ENCODE measurements at regions of chr4 and their contacts with region 1.

Region 1: DNA sequence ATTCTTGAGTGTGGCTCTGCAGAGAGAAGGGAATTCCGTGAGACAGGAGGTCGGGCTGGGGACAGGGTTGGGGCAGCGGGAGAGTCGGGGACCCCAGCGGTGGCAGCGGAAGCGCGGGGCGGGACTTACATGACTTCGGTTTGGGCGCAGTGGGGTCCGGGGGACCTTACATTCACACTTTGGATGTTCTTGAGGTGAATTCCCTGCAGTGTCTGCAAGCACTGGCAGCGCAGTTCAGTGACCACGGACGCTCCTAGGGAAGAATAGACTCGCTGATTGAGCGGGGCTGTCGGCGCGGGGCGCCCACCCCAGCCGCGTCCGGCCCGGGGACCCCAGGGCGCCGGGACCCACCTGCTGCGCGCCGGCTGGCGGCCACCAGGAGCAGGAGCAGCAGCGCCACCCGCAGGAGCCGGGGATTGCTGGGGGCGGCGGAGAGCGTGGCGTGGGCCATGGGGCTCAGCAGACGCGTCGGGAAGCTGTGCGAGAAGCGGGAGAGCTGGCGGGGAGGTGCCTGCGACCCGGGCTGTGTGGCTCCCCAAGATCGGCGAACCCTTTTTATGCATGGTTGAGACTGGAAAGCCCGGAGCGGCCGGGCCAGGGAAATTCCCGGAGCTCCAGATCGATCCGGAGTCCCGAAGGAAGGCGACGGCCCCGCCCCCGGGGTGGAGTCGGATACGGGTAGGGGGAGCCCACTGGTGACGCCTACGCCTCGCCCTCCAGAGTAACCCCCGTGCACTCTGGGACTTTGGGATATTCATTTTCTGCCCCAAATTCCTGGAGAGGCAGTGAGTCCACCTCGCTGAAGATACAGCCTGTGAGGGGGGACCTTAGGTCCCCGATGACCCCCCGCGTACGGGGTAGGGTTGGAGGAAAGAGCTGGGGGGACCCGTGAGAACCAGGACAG is at the start of gene CXCL3:
- DNase-seq: peak in 1 of 2 donors; percentile 86
- H3K4me3 ChIP-seq: peak within 1 kb of the TSS; percentile 78 to 83
- H3K27ac ChIP-seq: peak within 1 kb of the TSS; percentile 22 to 46
- H3K4me1 ChIP-seq: peaks cover 0 to 3% of the 10 kb centered on the region in 2 donors
- H3K27me3 ChIP-seq: no peaks in the 10 kb centered on the region
- CTCF ChIP-seq: peak; percentile 18 to 41 (median 38)
- total RNA-seq, gene CXCL3: not detected

Region 2: GRCh38 chr4:74098450-74098994 is 60.1 kb after region 1 on chr4:
- intact Hi-C with region 1: loop called (anchors 5 kb)
- DNase-seq: no peak
- H3K4me3 ChIP-seq: peak overlapping the region; percentile 66 to 67
- H3K27ac ChIP-seq: no peak overlapping the region
- H3K4me1 ChIP-seq: peaks cover 4 to 6% of the 10 kb centered on the region in 2 donors
- H3K27me3 ChIP-seq: no peaks in the 10 kb centered on the region
- CTCF ChIP-seq: no peak

Region 3: DNA sequence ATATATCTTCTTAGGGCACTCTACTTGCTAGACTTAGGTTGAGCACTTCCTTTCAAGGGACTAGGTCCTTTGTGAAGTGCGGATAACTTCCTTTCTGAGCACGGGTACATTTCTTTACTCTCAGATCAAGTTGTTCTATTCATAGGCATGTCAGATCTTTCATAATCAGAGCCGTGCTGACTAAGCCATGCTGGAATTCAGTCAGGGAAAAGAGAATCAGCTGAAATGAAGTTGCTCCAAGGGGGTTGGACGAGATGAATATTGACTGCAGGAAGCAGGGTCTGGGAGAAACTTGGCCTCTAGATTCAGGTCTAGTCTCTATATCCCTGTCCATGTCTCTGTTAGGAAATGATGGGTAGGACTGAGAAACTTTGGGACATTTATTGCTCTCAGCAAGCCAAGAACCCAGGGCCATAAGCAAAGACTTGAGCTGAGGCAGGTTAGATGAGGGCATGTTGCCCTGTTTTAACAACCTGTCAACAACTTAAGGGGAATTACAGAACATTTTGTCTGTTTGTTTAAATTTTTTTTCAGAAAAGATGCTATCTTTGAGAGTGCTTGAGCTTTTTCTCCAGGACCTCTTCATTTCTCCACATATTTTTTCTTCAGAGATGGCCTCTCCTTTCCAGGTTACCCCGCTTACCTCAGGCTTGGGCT is 434.9 kb after region 1 on chr4:
- intact Hi-C with region 1: no loop called
- DNase-seq: peak in 1 of 2 donors; percentile 67
- H3K4me3 ChIP-seq: no peak overlapping the region
- H3K27ac ChIP-seq: peak overlapping the region; percentile 66 to 68
- H3K4me1 ChIP-seq: peaks cover 0 to 15% of the 10 kb centered on the region in 2 donors
- H3K27me3 ChIP-seq: no peaks in the 10 kb centered on the region
- CTCF ChIP-seq: no peak

Measured in ascending aorta (tissue), 2 donors.